GM12878 (cell line): ENCODE measurements at regions of chr4 and their contacts with region 1.

Region 1: GRCh38 chr4:42617030-42617429 is 39.9 kb downstream of the ATP8A1 start:
- DNase-seq: no peak
- ATAC-seq: no peak
- H3K4me3 ChIP-seq: no peak overlapping the region
- H3K27ac ChIP-seq: no peak overlapping the region
- H3K4me1 ChIP-seq: no peaks in the 10 kb centered on the region
- H3K27me3 ChIP-seq: no peaks in the 10 kb centered on the region
- CTCF ChIP-seq: no peak
- EP300 ChIP-seq: no peak
- POLR2A ChIP-seq: no peak
- RAD21 ChIP-seq: no peak

Region 2: DNA sequence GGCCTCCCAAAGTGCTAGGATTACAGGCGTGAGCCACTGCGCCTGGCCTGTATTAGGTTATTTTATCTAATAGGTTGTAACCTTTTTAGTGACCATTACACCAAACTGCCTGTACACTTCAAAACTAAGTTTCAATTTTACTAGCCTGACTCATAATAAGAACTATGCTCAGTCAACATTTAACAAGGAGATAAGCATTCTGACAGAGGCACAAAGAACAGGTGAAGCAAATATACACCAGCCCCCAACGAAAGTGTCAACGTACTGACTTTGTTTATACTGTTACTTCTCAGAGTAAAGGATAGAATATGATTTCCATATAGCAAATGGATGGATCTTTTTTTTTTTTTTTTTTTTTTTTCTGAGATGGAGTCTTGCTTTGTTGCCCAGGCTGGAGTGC is 157.0 kb before region 1 on chr4:
- CTCF ChIA-PET with region 1: no interaction called
- POLR2A ChIA-PET with region 1: no interaction called
- RAD21 ChIA-PET with region 1: no interaction called
- SMC1A ChIA-PET with region 1: no interaction called
- in situ Hi-C with region 1: no loop called
- intact Hi-C with region 1: no loop called
- DNase-seq: peak; percentile 39
- ATAC-seq: peak; percentile 97
- H3K4me3 ChIP-seq: no peak overlapping the region
- H3K27ac ChIP-seq: no peak overlapping the region
- H3K4me1 ChIP-seq: peaks cover 5% of the 10 kb centered on the region; the same call in 1 of the 2 replicates
- H3K27me3 ChIP-seq: no peaks in the 10 kb centered on the region
- CTCF ChIP-seq: no peak
- EP300 ChIP-seq: no peak
- POLR2A ChIP-seq: no peak
- RAD21 ChIP-seq: no peak

Region 3: GRCh38 chr4:42603862-42604261 is 13.2 kb before region 1 on chr4:
- CTCF ChIA-PET with region 1: interaction called, 4 read pairs
- POLR2A ChIA-PET with region 1: no interaction called
- RAD21 ChIA-PET with region 1: interaction called, 3 read pairs
- SMC1A ChIA-PET with region 1: interaction called, 12 read pairs
- in situ Hi-C with region 1: no loop called
- intact Hi-C with region 1: no loop called
- DNase-seq: no peak
- ATAC-seq: no peak
- H3K4me3 ChIP-seq: no peak overlapping the region
- H3K27ac ChIP-seq: no peak overlapping the region
- H3K4me1 ChIP-seq: no peaks in the 10 kb centered on the region; the same call in 1 of the 2 replicates
- H3K27me3 ChIP-seq: no peaks in the 10 kb centered on the region
- CTCF ChIP-seq: no peak
- EP300 ChIP-seq: no peak
- POLR2A ChIP-seq: no peak
- RAD21 ChIP-seq: no peak